ENCODE measurements at regions of chr4 and their contacts with region 1.

Region 1: DNA sequence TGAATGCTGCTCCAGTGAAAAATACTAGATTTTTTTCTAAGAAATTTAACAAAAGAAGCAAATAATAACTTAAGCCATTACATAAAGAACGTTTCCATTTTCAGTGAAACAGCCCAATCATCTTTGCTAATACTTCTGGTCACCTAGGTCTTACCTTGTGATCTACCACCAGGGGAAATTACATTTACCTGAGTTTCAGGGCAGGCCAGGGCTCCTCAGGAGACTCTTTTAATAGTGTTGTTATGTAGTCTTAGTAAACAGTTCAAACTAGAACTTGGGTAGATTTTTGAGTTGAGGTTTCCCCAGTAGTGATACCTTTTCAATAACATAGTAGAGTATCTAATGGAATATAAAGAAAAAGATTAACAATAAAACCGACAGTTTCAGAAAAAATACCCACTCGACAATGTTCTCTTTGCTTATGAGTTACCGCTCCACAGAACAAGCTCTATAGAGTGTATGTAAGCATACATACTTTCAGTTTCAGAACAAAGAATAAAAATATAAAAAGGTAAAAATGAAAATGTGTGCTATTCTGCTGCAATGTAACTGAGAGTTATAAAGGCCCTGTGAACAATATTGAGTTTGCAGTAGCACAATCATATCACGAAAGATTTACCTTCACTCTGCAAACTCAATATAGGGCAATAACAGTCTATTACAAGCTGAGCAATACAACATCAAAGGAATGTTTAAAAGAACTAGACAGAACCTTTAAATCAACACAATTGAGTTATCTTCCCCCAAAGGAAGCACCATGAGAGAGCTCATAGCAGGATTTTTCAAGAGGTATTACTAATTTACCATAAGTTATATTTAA is 165.8 kb downstream of the ATOH1 start:
- DNase-seq: no peak
- ATAC-seq: no peak
- H3K4me3 Mint-ChIP-seq: no peak overlapping the region
- H3K27ac Mint-ChIP-seq: no peak overlapping the region
- H3K4me1 Mint-ChIP-seq: no peaks in the 10 kb centered on the region
- H3K27me3 Mint-ChIP-seq: peaks cover 3% of the 10 kb centered on the region

Region 2: GRCh38 chr4:94011190-94011589 is 16.8 kb after region 1 on chr4:
- CTCF ChIA-PET with region 1: no interaction called
- POLR2A ChIA-PET with region 1: no interaction called
- intact Hi-C with region 1: loop called in 1 of 2 experiments (anchors 1 kb)
- DNase-seq: no peak
- ATAC-seq: no peak
- H3K4me3 Mint-ChIP-seq: no peak overlapping the region
- H3K27ac Mint-ChIP-seq: no peak overlapping the region
- H3K4me1 Mint-ChIP-seq: no peaks in the 10 kb centered on the region
- H3K27me3 Mint-ChIP-seq: no peaks in the 10 kb centered on the region